ENCODE measurements at regions of chr12 and their contacts with region 1.

Region 1: GRCh38 chr12:53500776-53501614 is at the start of gene TARBP2:
- DNase-seq: peak; percentile 99
- ATAC-seq: peak; percentile 89
- total RNA-seq, gene TARBP2: 10.9 TPM

Region 2: GRCh38 chr12:53451661-53452158 is 49.3 kb before region 1 on chr12 and contains the start of gene PCBP2:
- intact Hi-C with region 1: loop called (anchors 5 kb)
- DNase-seq: peak; percentile 99
- ATAC-seq: peak; percentile 98
- total RNA-seq, gene PCBP2: 494 TPM